ENCODE measurements at regions of chr21 and their contacts with region 1.

Region 1: DNA sequence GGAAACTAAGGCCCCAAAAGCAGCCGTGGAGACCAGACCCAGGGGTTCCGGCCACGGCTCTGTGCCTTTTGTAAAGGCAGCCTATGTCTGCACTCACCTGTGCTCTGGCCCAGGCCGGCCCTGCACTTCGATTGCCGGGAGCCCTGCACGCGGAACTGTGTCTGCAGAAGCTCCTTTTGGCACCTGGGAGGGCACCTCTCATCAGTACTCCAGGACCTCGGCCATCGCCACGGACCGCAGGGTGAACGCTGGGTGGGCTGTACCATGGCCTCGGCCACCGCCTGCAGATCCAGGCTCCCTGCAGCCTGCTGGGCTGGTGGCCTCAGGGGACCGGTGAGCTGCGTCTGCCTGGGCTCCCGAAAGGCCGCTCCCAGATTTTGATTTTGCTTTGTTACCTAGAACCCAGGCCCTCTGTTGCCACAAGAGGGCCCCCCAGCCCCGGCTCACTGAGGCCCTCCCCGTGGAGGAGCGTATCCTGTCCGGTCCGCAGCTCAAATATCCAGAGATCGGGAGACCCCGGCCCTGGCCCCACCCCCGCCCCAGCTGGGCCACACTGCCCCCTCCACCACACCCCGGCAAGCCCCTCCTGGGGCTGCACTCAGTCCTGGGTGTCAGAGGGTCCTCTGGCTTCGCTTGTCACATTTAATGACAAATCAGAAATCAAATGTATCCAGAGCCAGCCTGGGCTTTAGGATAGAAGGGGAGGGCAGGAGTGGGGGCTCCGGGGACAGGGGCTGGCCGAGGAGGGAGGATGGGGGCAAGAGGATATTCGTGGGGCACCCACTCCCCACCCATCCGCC is 60.2 kb upstream of the PDE9A start:
- DNase-seq: peak; percentile 85
- ATAC-seq: peak; percentile 95

Region 2: GRCh38 chr21:42818328-42818749 is 225.1 kb after region 1 on chr21:
- intact Hi-C with region 1: loop called (anchors 5 kb)
- DNase-seq: peak; percentile 71
- ATAC-seq: peak; percentile 75